Sciatic nerve (tissue), 2 donors: ENCODE measurements at regions of chr9 and their contacts with region 1.

Region 1: DNA sequence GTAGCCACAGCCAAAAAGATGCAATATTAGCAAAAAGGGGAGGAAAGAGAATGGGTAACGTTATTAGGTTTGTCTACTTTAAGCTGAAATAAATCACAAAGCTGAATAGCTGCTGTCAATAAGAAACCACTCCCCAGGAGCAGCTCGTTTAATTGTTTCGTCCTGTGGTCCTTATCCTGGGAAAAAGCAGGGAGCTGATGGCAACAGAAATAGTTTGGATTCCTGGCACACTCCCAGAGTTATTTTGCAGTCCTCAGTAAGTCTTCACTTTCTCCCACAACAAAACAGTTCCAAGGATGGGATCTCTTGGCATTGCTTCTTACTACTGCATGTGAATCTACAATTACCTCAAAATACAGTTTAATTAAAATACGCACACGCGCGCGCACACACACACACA is 28.8 kb downstream of the FRMD3 start:
- DNase-seq: no peak
- ATAC-seq: no peak

Region 2: GRCh38 chr9:81833563-81834345 is 1675.6 kb before region 1 on chr9:
- intact Hi-C with region 1: loop called (anchors 5 kb)
- DNase-seq: no peak
- ATAC-seq: peak; percentile 27

Region 3: DNA sequence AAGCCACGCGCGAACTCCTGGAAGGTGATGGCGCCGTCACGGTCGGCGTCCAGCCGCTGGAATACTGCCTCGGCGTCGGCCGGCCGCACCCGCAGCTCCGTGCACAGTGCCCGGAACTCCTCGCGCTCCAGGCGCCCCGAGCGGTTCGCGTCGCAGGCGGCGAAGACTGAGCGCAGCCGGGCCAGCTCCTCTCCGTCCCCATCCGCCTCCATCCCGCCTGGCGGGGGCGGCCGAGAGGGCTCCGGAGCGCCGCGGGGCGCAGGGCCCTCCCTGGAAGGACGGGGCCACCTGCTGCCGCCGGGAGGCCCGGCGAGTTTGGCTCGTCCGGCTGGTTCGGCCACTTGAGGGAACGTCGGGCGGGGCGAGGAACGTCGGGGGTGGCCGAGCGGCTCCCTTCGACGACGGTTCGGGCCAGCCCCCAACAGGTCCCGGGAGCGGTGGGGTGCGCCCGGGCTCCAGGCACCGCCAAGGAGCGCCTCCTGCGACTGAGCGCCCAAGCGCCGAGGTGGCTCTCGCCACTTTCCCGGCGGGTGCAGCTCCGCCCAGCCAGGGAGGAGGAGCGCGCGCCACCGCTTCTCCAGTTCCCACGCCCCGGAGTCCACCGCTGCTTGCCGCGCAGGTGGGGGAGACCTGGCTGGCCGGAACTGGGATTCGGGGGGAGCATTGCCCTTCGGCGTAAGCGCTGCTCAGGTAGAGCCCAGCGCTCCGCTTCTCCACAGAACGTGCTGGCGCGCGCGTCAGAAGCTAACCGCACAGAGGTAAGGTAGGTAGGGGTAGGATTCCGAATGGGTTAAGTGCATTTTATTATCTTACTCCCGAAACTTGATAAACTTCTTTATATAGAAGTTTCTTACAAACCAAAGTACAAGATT is 446.5 kb before region 1 on chr9 and contains the start of gene RASEF:
- intact Hi-C with region 1: no loop called
- DNase-seq: no peak
- ATAC-seq: no peak
- total RNA-seq, gene RASEF: 0.09 TPM

Region 4: DNA sequence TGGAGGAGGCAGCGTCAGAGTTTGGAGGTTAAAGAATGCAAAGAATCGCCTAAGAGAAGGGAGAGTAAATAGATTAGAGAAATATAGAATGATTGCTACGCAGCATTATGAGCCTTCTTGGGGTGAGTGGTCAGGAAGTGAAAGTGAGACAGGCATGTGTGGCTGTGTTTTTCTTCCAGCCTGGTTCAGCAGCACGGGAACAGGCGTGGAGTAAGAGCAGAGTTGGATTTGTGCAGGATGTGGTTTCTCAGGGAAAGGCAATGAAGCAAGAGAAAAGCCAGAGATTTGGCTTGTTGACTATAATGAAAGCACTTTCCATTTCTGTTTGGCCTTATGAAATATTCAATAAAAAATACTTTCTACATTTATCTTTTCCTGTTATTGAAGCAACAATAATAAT is 63.1 kb after region 1 on chr9:
- intact Hi-C with region 1: no loop called
- DNase-seq: no peak
- ATAC-seq: peak; percentile 87